Heart right ventricle (tissue), 16 donors: ENCODE measurements at regions of chr10 and their contacts with region 1.

Region 1: DNA sequence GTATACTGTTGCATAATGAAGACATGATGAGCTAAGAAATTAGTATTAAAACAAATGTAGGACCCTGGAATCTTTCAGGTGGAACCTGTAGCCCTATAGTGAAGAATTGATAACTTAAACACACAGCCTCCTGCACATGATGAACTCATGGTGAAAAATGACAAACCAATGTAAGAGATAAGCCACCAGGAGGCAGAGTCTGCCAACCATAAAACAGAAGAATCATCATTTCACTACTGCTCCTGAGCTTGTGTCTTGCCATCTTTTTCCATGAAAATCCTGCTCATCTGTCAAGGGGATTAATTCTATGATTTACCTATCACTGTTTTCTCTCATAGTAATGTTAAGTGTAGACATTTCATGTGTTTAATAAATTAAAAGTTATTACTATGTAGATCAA is 363.9 kb downstream of the MALRD1 start:
- DNase-seq: no peak
- ATAC-seq: no peak
- H3K4me3 ChIP-seq: no peak overlapping the region
- H3K27ac ChIP-seq: no peak overlapping the region
- H3K4me1 ChIP-seq: no peaks in the 10 kb centered on the region
- H3K27me3 ChIP-seq: no peaks in the 10 kb centered on the region
- CTCF ChIP-seq: peak in 8 of 9 donors; percentile 13 to 58 (median 40)

Region 2: GRCh38 chr10:19367176-19367575 is 45.4 kb before region 1 on chr10:
- intact Hi-C with region 1: no loop called
- DNase-seq: no peak
- ATAC-seq: no peak
- H3K4me3 ChIP-seq: no peak overlapping the region
- H3K27ac ChIP-seq: no peak overlapping the region
- H3K4me1 ChIP-seq: no peaks in the 10 kb centered on the region
- H3K27me3 ChIP-seq: no peaks in the 10 kb centered on the region
- CTCF ChIP-seq: no peak

Region 3: DNA sequence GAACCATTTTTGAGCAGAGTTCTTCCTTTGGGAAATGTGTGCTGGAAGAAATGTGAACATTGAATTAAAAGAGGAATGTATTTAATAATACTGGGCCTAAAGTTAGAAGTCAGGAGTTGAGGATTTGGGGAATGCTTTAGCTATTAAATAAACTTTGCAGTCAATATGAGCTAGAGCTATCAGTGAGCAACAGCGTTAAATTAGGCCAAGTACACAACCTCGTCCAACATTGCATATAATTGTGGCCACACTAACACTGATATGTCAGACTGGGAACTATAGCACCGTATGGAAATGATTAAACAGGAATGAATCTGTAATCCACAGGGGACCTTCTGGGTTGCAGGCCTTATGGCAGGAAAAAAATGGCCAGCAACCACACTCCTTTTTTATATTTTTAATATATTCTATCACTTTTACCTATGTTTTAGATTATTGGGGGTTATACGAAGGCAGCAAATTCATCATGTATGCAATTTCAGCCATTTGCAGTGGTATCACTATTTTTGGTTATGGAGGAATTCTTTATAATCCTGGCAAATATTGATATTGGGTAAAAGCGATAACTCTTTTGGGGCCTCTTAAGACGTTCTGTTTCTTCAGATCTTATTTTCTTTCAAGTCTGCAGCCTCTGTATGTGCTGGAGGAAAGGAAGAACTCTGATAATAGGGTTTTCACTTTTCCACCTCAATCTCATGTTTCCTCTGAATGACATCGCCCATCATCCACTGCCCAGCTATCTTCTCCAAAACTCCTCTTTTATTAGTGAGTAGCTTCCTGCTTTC is 167.4 kb after region 1 on chr10:
- intact Hi-C with region 1: no loop called
- DNase-seq: no peak
- ATAC-seq: no peak
- H3K4me3 ChIP-seq: no peak overlapping the region
- H3K27ac ChIP-seq: no peak overlapping the region
- H3K4me1 ChIP-seq: no peaks in the 10 kb centered on the region
- H3K27me3 ChIP-seq: no peaks in the 10 kb centered on the region
- CTCF ChIP-seq: no peak

Region 4: GRCh38 chr10:19791032-19791431 is 378.5 kb after region 1 on chr10:
- intact Hi-C with region 1: loop called in 1 of 10 experiments (anchors 10 kb)
- DNase-seq: no peak
- ATAC-seq: no peak
- H3K4me3 ChIP-seq: no peak overlapping the region
- H3K27ac ChIP-seq: no peak overlapping the region
- H3K4me1 ChIP-seq: no peaks in the 10 kb centered on the region
- H3K27me3 ChIP-seq: no peaks in the 10 kb centered on the region
- CTCF ChIP-seq: no peak

Region 5: GRCh38 chr10:19904193-19904661 is 491.7 kb after region 1 on chr10:
- intact Hi-C with region 1: no loop called
- DNase-seq: no peak
- ATAC-seq: peak in 1 of 8 donors; percentile 22
- H3K4me3 ChIP-seq: no peak overlapping the region
- H3K27ac ChIP-seq: no peak overlapping the region
- H3K4me1 ChIP-seq: peaks cover 0 to 37% (median 6%) of the 10 kb centered on the region in 9 donors
- H3K27me3 ChIP-seq: no peaks in the 10 kb centered on the region
- CTCF ChIP-seq: no peak

Region 6: GRCh38 chr10:20768843-20769242 is 1356.3 kb after region 1 on chr10:
- intact Hi-C with region 1: loop called in 2 of 10 experiments (anchors 5 kb)
- DNase-seq: no peak
- ATAC-seq: peak in 2 of 8 donors; percentile 26 to 46
- H3K4me3 ChIP-seq: no peak overlapping the region
- H3K27ac ChIP-seq: no peak overlapping the region
- H3K4me1 ChIP-seq: peaks cover 0 to 16% (median 4%) of the 10 kb centered on the region in 9 donors
- H3K27me3 ChIP-seq: no peaks in the 10 kb centered on the region
- CTCF ChIP-seq: peak; percentile 19 to 74 (median 58)